CD4-positive, alpha-beta memory T cell (primary cell): ENCODE measurements at regions of chr5 and their contacts with region 1.

Region 1: DNA sequence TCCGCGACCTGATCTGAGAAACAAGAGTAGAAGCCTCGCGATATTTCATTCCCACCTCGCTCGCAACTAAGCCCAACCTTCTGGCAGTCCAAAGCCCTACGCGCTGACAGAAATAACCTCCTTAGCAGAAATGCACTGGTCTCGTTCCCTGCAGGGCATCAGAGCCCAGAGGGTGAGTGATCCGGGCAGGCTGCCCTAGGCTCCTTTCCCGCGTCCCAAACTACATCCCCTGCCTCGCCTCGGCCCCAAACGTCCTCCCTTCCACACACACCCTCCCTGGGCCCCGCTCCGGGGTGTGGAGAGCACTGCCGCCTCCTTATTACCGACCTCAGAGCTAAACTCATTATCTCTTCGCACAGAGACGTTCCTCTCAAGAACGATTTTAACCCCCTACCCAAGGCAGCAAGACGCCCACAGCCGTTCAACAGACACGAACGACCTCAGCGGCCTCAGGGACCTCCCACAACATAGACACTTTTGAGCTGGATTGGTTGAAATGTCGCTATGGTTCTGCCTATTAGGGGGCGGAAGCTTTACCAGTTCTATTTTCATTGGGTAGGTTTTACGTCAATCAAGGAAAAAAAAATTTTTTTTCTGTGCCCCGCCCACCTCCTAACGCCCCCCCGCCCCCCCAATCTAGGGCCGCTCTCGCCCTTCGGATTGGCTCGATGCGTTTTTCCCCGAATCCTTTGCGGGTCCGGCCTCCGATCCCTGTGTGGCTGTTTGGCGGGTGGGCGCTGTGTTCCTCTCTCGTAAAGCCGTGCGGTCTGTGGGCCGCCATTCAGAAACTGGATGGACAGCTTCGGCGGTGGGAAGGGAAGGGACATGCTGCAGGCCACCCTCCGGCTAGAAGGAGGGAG is at the start of gene CETN3:
- DNase-seq: peak; percentile 89 to 91 (median 91)
- H3K4me3 ChIP-seq: peak within 1 kb of the TSS; percentile 90 to 99
- H3K4me3 Mint-ChIP-seq: no peak within 1 kb of the TSS
- H3K27ac ChIP-seq: peak within 1 kb of the TSS; percentile 89
- H3K27ac Mint-ChIP-seq: no peak within 1 kb of the TSS
- H3K4me1 ChIP-seq: peaks cover 20% of the 10 kb centered on the region
- H3K4me1 Mint-ChIP-seq: peaks cover 11 to 17% (median 12%) of the 10 kb centered on the region in 4 donors
- H3K27me3 ChIP-seq: no peaks in the 10 kb centered on the region
- H3K27me3 Mint-ChIP-seq: no peaks in the 10 kb centered on the region
- total RNA-seq, gene CETN3: 15.9 to 22.1 TPM

Region 2: GRCh38 chr5:90474235-90475109 is 64.9 kb after region 1 on chr5 and contains the starts of genes MBLAC2 and POLR3G:
- CTCF ChIA-PET with region 1: interaction called, 10 read pairs
- POLR2A ChIA-PET with region 1: interaction called, 72 read pairs
- intact Hi-C with region 1: loop called (anchors 1 kb)
- DNase-seq: peak; percentile 91 to 93 (median 92)
- H3K4me3 ChIP-seq: peak within 1 kb of the TSS; percentile 79 to 87
- H3K4me3 Mint-ChIP-seq: peak within 1 kb of the TSS; percentile 95 to 99 (median 99)
- H3K27ac ChIP-seq: peak within 1 kb of the TSS; percentile 66
- H3K27ac Mint-ChIP-seq: peak within 1 kb of the TSS; percentile 84 to 98 (median 95)
- H3K4me1 ChIP-seq: peaks cover 35% of the 10 kb centered on the region
- H3K4me1 Mint-ChIP-seq: peaks cover 24 to 46% (median 35%) of the 10 kb centered on the region in 4 donors
- H3K27me3 ChIP-seq: no peaks in the 10 kb centered on the region
- H3K27me3 Mint-ChIP-seq: no peaks in the 10 kb centered on the region
- total RNA-seq, gene MBLAC2: 14.7 to 16.1 TPM
- total RNA-seq, gene POLR3G: 1.2 to 1.5 TPM

Region 3: DNA sequence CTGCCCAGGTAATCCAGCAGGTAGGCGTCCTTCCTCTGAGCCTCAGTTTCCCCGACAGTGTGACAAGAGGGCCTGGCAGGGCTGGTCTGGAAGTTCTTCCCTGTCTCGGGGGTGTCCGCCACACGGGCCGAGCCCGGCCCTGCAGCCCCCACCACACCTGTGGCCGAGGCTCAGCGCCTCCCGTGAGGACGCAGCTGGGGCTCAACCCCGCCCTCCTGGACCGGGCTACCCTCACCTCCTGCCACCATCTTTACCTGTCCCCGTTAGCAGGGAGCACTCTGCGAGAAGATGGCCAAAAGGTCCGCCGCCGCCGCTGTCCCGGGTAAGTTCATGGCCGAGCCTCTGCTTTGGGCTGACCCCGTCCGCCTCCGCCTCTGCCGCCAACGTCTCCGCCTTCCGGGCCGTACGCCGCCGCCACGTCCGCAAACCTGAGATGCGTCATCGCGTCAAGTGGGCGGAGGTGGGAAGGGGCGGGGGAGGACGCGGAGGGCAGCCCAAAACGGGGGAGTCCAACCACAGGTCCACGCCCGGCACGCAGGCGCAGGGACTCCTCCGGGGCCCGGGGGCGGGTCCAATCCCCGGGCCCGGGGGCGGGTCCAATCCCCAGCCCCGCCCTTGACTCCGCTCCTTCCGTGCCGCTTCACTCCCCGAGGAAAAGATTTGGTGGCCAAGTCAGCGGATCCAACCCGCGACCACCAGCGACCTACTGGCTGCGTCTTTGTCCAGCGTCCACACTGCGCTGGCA is 119.8 kb after region 1 on chr5 and contains the start of gene LYSMD3:
- CTCF ChIA-PET with region 1: interaction called, 24 read pairs
- POLR2A ChIA-PET with region 1: interaction called, 39 read pairs
- intact Hi-C with region 1: loop called (anchors 1 kb)
- DNase-seq: peak; percentile 95 to 97 (median 96)
- H3K4me3 ChIP-seq: peak within 1 kb of the TSS; percentile 83 to 93
- H3K4me3 Mint-ChIP-seq: peak within 1 kb of the TSS; percentile 97 to 100 (median 99)
- H3K27ac ChIP-seq: peak within 1 kb of the TSS; percentile 98
- H3K27ac Mint-ChIP-seq: peak within 1 kb of the TSS; percentile 97 to 100 (median 99)
- H3K4me1 ChIP-seq: peaks cover 35% of the 10 kb centered on the region
- H3K4me1 Mint-ChIP-seq: peaks cover 25 to 42% (median 34%) of the 10 kb centered on the region in 4 donors
- H3K27me3 ChIP-seq: no peaks in the 10 kb centered on the region
- H3K27me3 Mint-ChIP-seq: peaks cover 9 to 12% of the 10 kb centered on the region in 2 donors
- total RNA-seq, gene LYSMD3: 30.1 to 30.9 TPM